ENCODE measurements at regions of chr10 and their contacts with region 1.

Region 1: GRCh38 chr10:5684318-5684970 is at the start of gene TASOR2:
- DNase-seq: peak; percentile 99
- H3K4me3 Mint-ChIP-seq: peak within 1 kb of the TSS; percentile 99
- H3K27ac Mint-ChIP-seq: peak within 1 kb of the TSS; percentile 98
- H3K4me1 Mint-ChIP-seq: peaks cover 45% of the 10 kb centered on the region
- H3K27me3 Mint-ChIP-seq: peaks cover 11% of the 10 kb centered on the region
- total RNA-seq, gene TASOR2: 78.2 and 92.3 TPM in 2 replicates

Region 2: DNA sequence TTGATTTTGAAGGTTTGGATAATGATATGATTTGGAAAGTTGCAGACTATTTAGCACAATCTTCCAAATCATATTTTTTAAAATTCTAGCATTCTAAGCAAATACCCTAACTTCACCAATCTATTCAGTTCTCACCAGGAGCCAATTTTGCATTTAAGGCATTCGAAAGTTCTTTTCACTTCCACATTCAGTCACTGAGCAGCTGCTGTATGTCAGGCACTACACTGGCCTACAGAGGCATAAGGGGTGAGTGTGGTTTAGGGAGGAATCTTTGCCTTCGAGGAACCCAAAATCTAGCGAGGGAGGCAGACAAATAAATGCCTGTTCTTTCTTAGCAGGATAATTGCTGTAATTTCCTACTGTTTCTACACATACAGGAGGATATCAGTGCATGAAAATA is 330.4 kb before region 1 on chr10:
- intact Hi-C with region 1: no loop called
- DNase-seq: no peak
- H3K4me3 Mint-ChIP-seq: no peak overlapping the region
- H3K27ac Mint-ChIP-seq: no peak overlapping the region
- H3K4me1 Mint-ChIP-seq: peaks cover 8% of the 10 kb centered on the region
- H3K27me3 Mint-ChIP-seq: peaks cover 5% of the 10 kb centered on the region

Region 3: GRCh38 chr10:5629303-5630111 is 54.9 kb before region 1 on chr10:
- intact Hi-C with region 1: loop called (anchors 5 kb)
- DNase-seq: peak; percentile 96
- H3K4me3 Mint-ChIP-seq: peak overlapping the region; percentile 50
- H3K27ac Mint-ChIP-seq: peak overlapping the region; percentile 87
- H3K4me1 Mint-ChIP-seq: peaks cover 20% of the 10 kb centered on the region
- H3K27me3 Mint-ChIP-seq: peaks cover 4% of the 10 kb centered on the region

Region 4: DNA sequence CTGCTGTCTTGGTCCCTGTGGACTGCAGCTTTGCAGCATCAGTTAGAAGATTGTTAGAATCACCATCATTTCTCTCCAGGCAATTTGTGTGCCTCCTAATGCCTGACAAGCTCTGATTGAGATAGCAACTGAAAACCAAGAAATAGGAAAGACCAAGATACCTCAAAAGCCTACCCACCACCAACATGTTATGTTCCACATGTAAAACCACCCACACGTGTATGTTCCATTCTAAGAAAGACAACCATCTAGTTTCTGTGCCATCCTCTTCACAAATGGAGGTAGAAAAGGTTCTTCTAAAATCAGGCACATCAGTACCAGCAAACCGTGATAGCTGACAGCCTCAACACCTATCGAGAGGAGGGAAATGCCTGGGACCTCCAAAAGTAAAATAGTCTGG is 47.1 kb after region 1 on chr10:
- intact Hi-C with region 1: loop called (anchors 2 kb)
- DNase-seq: no peak
- H3K4me3 Mint-ChIP-seq: peak overlapping the region; percentile 13
- H3K27ac Mint-ChIP-seq: peak overlapping the region; percentile 73
- H3K4me1 Mint-ChIP-seq: peaks cover 28% of the 10 kb centered on the region
- H3K27me3 Mint-ChIP-seq: no peaks in the 10 kb centered on the region

Region 5: GRCh38 chr10:5813287-5814109 is 129.1 kb after region 1 on chr10 and contains the start of gene GDI2:
- intact Hi-C with region 1: loop called (anchors 2 kb)
- DNase-seq: peak; percentile 99
- H3K4me3 Mint-ChIP-seq: peak within 1 kb of the TSS; percentile 93
- H3K27ac Mint-ChIP-seq: peak within 1 kb of the TSS; percentile 95
- H3K4me1 Mint-ChIP-seq: peaks cover 56% of the 10 kb centered on the region
- H3K27me3 Mint-ChIP-seq: no peaks in the 10 kb centered on the region
- total RNA-seq, gene GDI2: 305 and 307 TPM in 2 replicates

Region 6: GRCh38 chr10:5832936-5833335 is 148.5 kb after region 1 on chr10:
- intact Hi-C with region 1: no loop called
- DNase-seq: no peak
- H3K4me3 Mint-ChIP-seq: no peak overlapping the region
- H3K27ac Mint-ChIP-seq: no peak overlapping the region
- H3K4me1 Mint-ChIP-seq: no peaks in the 10 kb centered on the region
- H3K27me3 Mint-ChIP-seq: no peaks in the 10 kb centered on the region

Region 7: GRCh38 chr10:6254201-6254600 is 569.8 kb after region 1 on chr10:
- intact Hi-C with region 1: no loop called
- DNase-seq: no peak
- H3K4me3 Mint-ChIP-seq: no peak overlapping the region
- H3K27ac Mint-ChIP-seq: no peak overlapping the region
- H3K4me1 Mint-ChIP-seq: peaks cover 9% of the 10 kb centered on the region
- H3K27me3 Mint-ChIP-seq: no peaks in the 10 kb centered on the region